HepG2 (cell line): ENCODE measurements at regions of chr3 and their contacts with region 1.

Region 1: DNA sequence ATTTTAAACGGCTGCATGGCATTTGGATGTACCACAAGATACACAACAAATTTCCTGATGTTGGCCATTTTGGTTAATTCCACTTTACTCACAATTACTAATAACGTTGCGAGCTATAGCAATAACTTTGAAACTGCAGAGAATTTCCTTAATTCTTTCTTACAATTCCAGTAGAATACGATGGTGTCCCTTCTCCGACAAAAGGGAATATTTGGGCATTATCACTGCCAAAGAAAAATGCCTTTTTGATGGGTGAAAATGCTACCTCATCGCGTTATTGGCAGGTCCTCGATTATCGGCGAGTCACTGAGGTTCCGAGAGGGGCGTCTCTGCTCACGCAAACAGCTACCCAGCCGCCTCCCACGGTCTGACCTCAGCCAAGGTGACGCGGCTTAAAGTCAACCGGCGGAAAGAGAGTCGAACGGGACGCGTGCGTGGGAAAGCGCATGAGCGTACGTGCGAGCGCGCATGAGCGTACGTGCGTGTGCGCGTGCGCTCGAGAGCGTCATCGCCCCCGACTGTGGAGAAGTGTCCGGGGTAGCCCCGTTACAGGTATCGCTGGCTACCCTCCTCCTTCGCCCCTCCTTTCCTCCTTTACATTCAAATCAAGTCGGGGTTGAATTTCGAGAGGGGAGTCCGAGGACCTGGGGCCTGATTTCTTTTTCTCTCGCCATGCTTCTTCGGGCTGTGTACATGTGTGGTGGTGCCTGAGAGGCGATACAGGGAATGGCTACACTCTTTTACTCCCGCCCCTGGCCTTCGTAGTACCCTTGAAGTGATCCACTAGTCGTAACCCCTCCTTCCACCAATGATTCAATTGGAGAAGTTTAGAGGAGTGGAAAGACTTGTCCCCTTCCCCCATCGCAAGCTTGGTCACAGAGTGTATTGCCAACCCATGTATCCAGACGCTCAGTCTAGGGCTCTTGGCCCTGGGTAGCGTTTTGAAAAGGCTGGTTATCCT is at the start of gene OXSM:
- DNase-seq: peak; percentile 87
- ATAC-seq: peak; percentile 97
- H3K4me3 ChIP-seq: peak within 1 kb of the TSS; percentile 64 to 71 (median 69)
- H3K27ac ChIP-seq: peak within 1 kb of the TSS; percentile 66
- H3K4me1 ChIP-seq: peaks cover 53% of the 10 kb centered on the region
- H3K27me3 ChIP-seq: no peaks in the 10 kb centered on the region
- CTCF ChIP-seq: peak; percentile 31
- EP300 ChIP-seq: peak in 1 of 2 experiments; percentile 57; a peak in 1 of 4 replicates
- POLR2A ChIP-seq: peak; percentile 74 to 96
- RAD21 ChIP-seq: 0 out of 2 replicates have a peak, but pooled peaks have one; percentile 33
- total RNA-seq, gene OXSM: 14.1 and 18.2 TPM in 2 replicates

Region 2: DNA sequence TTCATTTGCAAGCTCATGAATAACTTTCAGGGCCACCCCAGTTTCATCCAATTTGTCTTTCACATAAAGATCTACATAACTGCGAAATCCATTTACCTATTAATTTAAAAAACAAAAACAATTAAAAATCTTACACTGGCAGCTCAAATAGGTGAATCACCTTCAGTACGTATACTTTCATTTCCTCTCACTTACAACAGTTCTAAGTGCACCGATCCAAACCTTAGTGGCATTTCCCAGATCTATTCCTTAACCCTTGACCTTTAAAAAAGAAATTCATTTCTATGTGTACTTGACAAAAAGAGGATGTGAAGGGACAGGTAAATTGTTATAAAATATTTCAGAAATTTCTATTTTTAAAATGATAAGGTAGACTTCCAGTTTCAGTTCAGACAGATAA is 156.0 kb before region 1 on chr3:
- CTCF ChIA-PET with region 1: no interaction called
- POLR2A ChIA-PET with region 1: no interaction called
- in situ Hi-C with region 1: no loop called
- intact Hi-C with region 1: no loop called
- DNase-seq: no peak
- ATAC-seq: no peak
- H3K4me3 ChIP-seq: no peak overlapping the region
- H3K27ac ChIP-seq: no peak overlapping the region
- H3K4me1 ChIP-seq: no peaks in the 10 kb centered on the region
- H3K27me3 ChIP-seq: no peaks in the 10 kb centered on the region
- CTCF ChIP-seq: no peak
- EP300 ChIP-seq: no peak
- POLR2A ChIP-seq: no peak
- RAD21 ChIP-seq: no peak

Region 3: GRCh38 chr3:25664810-25665314 is 125.0 kb before region 1 on chr3 and contains the start of gene TOP2B:
- CTCF ChIA-PET with region 1: no interaction called
- POLR2A ChIA-PET with region 1: no interaction called
- in situ Hi-C with region 1: loop called (anchors 25 kb)
- intact Hi-C with region 1: loop called (anchors 2 kb)
- DNase-seq: peak; percentile 90
- ATAC-seq: peak; percentile 96
- H3K4me3 ChIP-seq: peak within 1 kb of the TSS; percentile 71 to 93 (median 89)
- H3K27ac ChIP-seq: peak within 1 kb of the TSS; percentile 93
- H3K4me1 ChIP-seq: peaks cover 40% of the 10 kb centered on the region
- H3K27me3 ChIP-seq: no peaks in the 10 kb centered on the region; a peak in 1 of 5 replicates
- CTCF ChIP-seq: no peak
- EP300 ChIP-seq: peak; percentile 15 to 62; a peak in 1 of 4 replicates
- POLR2A ChIP-seq: peak in 1 of 2 experiments; percentile 75; a peak in 2 of 4 replicates
- RAD21 ChIP-seq: no peak
- total RNA-seq, gene TOP2B: 88.1 and 140 TPM in 2 replicates

Region 4: GRCh38 chr3:25846282-25846681 is 56.4 kb after region 1 on chr3:
- CTCF ChIA-PET with region 1: no interaction called
- POLR2A ChIA-PET with region 1: no interaction called
- in situ Hi-C with region 1: no loop called
- intact Hi-C with region 1: loop called (anchors 2 kb)
- DNase-seq: no peak
- ATAC-seq: no peak
- H3K4me3 ChIP-seq: no peak overlapping the region
- H3K27ac ChIP-seq: no peak overlapping the region
- H3K4me1 ChIP-seq: no peaks in the 10 kb centered on the region
- H3K27me3 ChIP-seq: no peaks in the 10 kb centered on the region
- CTCF ChIP-seq: no peak
- EP300 ChIP-seq: no peak
- POLR2A ChIP-seq: no peak
- RAD21 ChIP-seq: no peak

Region 5: GRCh38 chr3:25856902-25857518 is 67.1 kb after region 1 on chr3:
- CTCF ChIA-PET with region 1: no interaction called
- POLR2A ChIA-PET with region 1: no interaction called
- in situ Hi-C with region 1: no loop called
- intact Hi-C with region 1: loop called (anchors 2 kb)
- DNase-seq: peak; percentile 23
- ATAC-seq: peak; percentile 83
- H3K4me3 ChIP-seq: no peak overlapping the region
- H3K27ac ChIP-seq: no peak overlapping the region
- H3K4me1 ChIP-seq: no peaks in the 10 kb centered on the region
- H3K27me3 ChIP-seq: no peaks in the 10 kb centered on the region
- CTCF ChIP-seq: peak; percentile 70
- EP300 ChIP-seq: no peak
- POLR2A ChIP-seq: no peak
- RAD21 ChIP-seq: no peak